ENCODE measurements at regions of chr18 and their contacts with region 1.

Region 1: GRCh38 chr18:13813271-13813849 is 10.6 kb upstream of the MC5R start:
- DNase-seq: peak; percentile 58
- H3K4me3 Mint-ChIP-seq: no peak overlapping the region
- H3K27ac Mint-ChIP-seq: no peak overlapping the region
- H3K4me1 Mint-ChIP-seq: no peaks in the 10 kb centered on the region
- H3K27me3 Mint-ChIP-seq: peaks cover 18% of the 10 kb centered on the region

Region 2: DNA sequence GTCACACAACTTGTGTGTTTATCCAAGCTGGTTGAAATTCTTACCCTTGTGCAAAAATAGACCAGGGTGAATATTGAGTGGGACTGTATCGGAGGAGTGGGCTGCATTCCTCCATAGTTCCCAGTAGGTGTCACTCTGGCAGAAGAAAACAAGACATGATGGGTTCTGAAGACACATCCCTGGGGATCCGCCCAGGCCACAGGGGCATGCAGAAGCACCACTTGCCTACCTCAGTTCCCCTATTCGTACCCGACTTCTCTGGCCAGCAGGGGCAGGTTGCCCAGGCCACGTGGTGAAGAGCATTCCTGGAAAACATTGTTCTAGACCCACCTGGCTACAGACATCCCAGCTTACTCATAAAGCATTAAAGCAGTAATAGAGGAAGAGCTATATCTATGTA is 255.2 kb before region 1 on chr18:
- CTCF ChIA-PET with region 1: interaction called, 11 read pairs
- POLR2A ChIA-PET with region 1: no interaction called
- DNase-seq: peak; percentile 33
- H3K4me3 Mint-ChIP-seq: no peak overlapping the region
- H3K27ac Mint-ChIP-seq: no peak overlapping the region
- H3K4me1 Mint-ChIP-seq: peaks cover 22% of the 10 kb centered on the region
- H3K27me3 Mint-ChIP-seq: no peaks in the 10 kb centered on the region

Region 3: DNA sequence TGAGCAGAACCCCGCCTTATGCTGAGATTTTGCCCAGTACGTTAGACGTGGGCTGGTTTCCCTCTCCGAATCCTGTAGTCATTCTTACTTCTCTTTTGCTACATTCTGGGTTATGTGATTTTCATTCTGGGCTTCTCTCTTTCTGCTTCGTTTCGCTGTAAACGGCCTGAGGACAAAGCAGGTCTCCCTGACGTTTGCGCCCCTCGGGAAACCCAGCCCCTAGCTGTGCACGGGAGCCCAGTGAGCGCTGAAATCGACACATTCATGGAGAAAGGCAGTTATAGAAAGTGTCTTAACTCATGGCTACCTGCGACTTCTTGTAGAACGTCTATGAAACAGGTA is 12.1 kb before region 1 on chr18:
- CTCF ChIA-PET with region 1: interaction called, 20 read pairs
- POLR2A ChIA-PET with region 1: no interaction called
- DNase-seq: no peak
- H3K4me3 Mint-ChIP-seq: peak overlapping the region; percentile 1
- H3K27ac Mint-ChIP-seq: no peak overlapping the region
- H3K4me1 Mint-ChIP-seq: peaks cover 3% of the 10 kb centered on the region
- H3K27me3 Mint-ChIP-seq: peaks cover 62% of the 10 kb centered on the region

Region 4: DNA sequence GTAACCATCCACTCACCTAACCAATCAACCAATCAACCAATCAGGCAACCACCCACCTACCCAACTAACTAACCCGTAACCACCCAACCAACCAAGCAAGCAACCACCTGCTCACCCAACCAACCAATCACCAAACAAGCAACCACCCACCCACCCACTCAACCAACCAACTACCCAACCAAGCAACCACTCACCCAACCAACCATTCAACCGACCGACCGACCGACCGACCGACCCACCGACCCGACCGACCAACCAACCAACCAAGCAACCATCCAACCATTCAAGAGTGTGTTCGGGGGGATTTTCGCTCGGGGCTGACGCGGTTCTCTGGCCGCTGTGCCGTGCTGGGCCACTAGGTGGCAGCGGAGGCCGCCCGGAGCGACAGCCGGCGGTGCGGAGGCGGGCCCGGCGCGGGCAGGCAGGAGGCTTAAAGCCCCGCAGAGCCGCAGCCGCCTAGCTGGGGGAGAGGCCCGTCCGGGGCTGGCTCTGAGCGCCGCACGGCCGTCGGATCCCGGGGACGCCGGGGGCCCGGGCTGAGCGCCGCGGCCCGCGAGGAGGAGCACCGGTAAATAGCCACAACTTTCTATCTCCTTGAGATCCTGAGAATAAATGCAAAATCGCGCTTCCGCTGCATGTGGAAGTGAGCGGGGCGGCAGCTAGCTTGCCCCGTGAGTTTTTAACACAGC is 10.5 kb after region 1 on chr18 and contains the start of gene MC5R:
- CTCF ChIA-PET with region 1: interaction called, 18 read pairs
- POLR2A ChIA-PET with region 1: no interaction called
- DNase-seq: peak; percentile 70
- H3K4me3 Mint-ChIP-seq: peak within 1 kb of the TSS; percentile 19
- H3K27ac Mint-ChIP-seq: no peak within 1 kb of the TSS
- H3K4me1 Mint-ChIP-seq: peaks cover 6% of the 10 kb centered on the region
- H3K27me3 Mint-ChIP-seq: peaks cover 20% of the 10 kb centered on the region
- total RNA-seq, gene MC5R: not detected

Region 5: GRCh38 chr18:13895505-13896033 is 82.2 kb after region 1 on chr18:
- CTCF ChIA-PET with region 1: no interaction called
- POLR2A ChIA-PET with region 1: no interaction called
- DNase-seq: no peak
- H3K4me3 Mint-ChIP-seq: no peak overlapping the region
- H3K27ac Mint-ChIP-seq: no peak overlapping the region
- H3K4me1 Mint-ChIP-seq: no peaks in the 10 kb centered on the region
- H3K27me3 Mint-ChIP-seq: peaks cover 7% of the 10 kb centered on the region

Region 6: GRCh38 chr18:14086458-14087231 is 273.3 kb after region 1 on chr18:
- CTCF ChIA-PET with region 1: interaction called, 33 read pairs
- POLR2A ChIA-PET with region 1: no interaction called
- DNase-seq: no peak
- H3K4me3 Mint-ChIP-seq: no peak overlapping the region
- H3K27ac Mint-ChIP-seq: no peak overlapping the region
- H3K4me1 Mint-ChIP-seq: no peaks in the 10 kb centered on the region
- H3K27me3 Mint-ChIP-seq: no peaks in the 10 kb centered on the region

Measured in activated CD4-positive, alpha-beta memory T cell treated with anti-CD3 and anti-CD28 coated beads, Interleukin-2, amount 10 ng/mL, durations not matched to agents 7 days and 5 days (primary cell).